Activated T-helper 1 cell treated with anti-CD3 and anti-CD28 coated beads, Interleukin-12 subunit alpha, Interleukin-12 subunit beta, Interleukin-2, Interleukin-4 antibody, amounts not matched to agents 30 ng/mL and 10 ng/mL and 1 ng/mL, durations not matched to agents 14 hours and 24 hours and 36 hours (primary cell): ENCODE measurements at regions of chr20 and their contacts with region 1.

Region 1: DNA sequence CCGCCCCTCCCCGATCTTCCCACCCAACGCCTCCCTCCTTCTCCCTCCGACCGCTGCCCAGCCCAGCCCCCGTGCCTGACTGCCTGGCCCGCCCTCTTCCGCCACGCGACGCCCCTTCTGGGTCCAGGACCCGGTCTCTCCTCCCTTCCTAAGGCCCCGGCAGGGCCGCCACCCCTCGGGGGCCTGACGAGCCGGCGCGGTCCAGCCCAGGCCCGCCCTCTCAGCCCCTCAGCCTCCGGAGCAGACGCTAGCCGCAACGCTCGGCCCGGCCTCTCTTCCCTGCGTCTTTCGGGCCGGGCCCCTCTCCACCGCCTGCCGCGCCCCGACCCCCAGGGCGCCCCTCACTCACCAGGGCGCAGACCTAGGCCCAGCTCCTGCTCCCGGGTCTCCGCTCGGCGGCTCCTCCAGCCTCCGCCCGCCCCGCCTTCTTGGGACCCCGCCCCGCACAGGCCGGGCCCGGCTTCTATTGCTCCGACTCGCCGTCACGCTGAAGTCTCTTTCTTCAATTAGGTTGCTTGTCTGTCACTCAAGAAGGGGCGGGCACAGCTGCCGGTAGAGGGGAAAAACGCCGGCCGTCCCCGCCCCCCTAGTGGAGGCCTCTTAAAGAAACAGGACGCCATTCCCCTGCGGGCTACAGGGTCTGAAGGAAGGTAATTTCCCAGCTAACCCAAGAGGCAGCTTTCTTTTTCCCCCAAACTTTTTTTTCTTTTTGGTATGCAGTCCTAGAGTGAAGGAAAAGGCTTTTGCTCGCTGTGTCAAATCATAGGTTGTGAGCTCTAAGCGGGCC is at the start of gene ELMO2:
- DNase-seq: peak; percentile 94
- H3K4me3 Mint-ChIP-seq: peak within 1 kb of the TSS; percentile 94
- H3K27ac Mint-ChIP-seq: peak within 1 kb of the TSS; percentile 96
- H3K4me1 Mint-ChIP-seq: peaks cover 68% of the 10 kb centered on the region
- H3K27me3 Mint-ChIP-seq: no peaks in the 10 kb centered on the region
- total RNA-seq, gene ELMO2: 79.7 and 91.1 TPM in 2 replicates

Region 2: GRCh38 chr20:45934586-45935415 is 471.6 kb before region 1 on chr20 and contains the start of gene PCIF1:
- intact Hi-C with region 1: loop called (anchors 1 kb)
- DNase-seq: peak; percentile 96
- H3K4me3 Mint-ChIP-seq: peak within 1 kb of the TSS; percentile 99
- H3K27ac Mint-ChIP-seq: peak within 1 kb of the TSS; percentile 98
- H3K4me1 Mint-ChIP-seq: peaks cover 23% of the 10 kb centered on the region
- H3K27me3 Mint-ChIP-seq: no peaks in the 10 kb centered on the region
- total RNA-seq, gene PCIF1: 27.9 and 28.5 TPM in 2 replicates

Region 3: DNA sequence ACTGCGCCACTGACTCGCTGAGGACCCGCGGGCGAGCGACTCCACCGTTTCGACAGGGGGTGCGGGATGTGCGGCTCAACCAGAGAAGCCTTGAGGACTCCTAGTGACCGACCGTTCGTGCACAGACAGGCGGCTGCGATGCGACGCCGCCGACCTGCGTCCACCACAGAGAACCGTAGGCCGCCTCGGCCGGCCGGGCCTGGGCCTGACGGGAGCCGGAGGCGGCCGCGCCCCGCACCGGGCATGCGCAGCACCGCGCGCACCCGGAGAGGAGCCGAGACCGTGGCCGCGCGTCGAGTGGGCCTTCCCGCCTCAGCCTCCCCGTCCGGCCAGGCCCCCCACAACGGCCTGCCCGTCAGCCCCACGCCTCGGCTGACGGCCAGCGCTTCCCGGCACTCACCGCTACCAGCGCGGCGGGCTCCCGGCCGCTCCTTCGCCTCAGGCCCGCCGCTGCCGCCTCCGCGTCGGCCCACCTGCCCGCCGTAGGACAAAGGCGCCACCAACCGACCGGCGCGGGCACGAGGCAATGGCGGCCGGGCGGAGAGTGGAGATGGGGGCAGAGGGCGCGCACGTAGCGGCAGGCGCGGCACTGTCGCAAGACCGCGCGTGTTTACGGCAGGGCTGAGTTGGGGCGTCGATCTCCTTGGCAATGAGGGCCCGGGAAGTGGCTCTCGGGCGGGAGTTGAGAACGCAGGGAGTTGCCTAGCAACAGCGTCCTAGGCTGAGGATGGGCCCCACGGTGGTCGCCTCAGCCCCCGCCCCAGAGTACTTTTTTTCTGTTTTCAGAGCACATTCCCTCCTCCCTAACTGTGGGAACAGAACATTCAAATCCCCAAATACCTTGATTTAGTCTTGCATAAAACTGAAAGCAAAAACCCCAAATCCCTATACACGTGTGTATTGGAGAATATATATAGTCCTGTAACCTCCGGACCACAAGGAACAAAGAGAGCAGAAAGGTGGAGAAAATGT is 316.7 kb before region 1 on chr20 and contains the start of gene NCOA5:
- intact Hi-C with region 1: loop called (anchors 1 kb)
- DNase-seq: peak; percentile 91
- H3K4me3 Mint-ChIP-seq: peak within 1 kb of the TSS; percentile 92
- H3K27ac Mint-ChIP-seq: peak within 1 kb of the TSS; percentile 94
- H3K4me1 Mint-ChIP-seq: peaks cover 48% of the 10 kb centered on the region
- H3K27me3 Mint-ChIP-seq: peaks cover 4% of the 10 kb centered on the region
- total RNA-seq, gene NCOA5: 30.4 and 32.9 TPM in 2 replicates

Region 4: GRCh38 chr20:46324960-46325703 is 81.3 kb before region 1 on chr20:
- intact Hi-C with region 1: no loop called
- DNase-seq: no peak
- H3K4me3 Mint-ChIP-seq: no peak overlapping the region
- H3K27ac Mint-ChIP-seq: no peak overlapping the region
- H3K4me1 Mint-ChIP-seq: no peaks in the 10 kb centered on the region
- H3K27me3 Mint-ChIP-seq: peaks cover 19% of the 10 kb centered on the region

Region 5: DNA sequence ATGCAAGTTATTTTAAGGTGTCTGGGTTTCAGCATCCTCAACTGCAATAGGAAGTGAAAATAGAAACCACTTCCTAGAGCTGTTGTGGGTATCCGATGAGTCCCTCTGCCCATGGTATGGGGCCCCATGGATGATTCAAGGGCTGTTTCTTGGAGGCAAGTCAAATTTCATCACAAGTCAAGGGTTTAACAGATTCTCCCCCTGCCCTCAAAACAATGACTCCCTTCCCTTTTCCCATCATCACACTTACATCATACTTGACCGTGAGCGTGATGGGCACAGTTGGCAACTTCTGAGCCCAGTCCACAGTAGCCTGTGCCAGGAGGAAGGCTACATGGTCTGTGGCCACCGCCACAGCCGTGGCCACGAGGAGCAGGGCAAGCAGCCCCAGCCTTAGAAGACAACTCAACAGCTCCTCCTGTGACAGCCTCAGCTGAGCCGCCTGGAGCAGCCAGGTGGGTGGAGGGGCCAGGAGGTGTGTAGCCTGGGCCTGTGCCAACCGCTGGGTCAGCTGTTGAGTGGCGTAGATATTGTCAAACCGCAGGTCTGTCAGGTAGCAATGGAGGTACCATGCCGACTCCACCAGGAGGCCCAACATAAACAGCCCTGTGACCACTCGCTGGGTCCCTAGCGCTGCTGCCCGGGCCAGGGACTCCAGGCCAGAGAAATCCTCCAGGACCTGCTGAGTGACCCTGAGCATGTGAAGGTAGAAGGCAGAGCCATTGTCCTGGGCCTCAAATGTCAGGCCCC is 138.9 kb after region 1 on chr20:
- intact Hi-C with region 1: loop called (anchors 2 kb)
- DNase-seq: peak; percentile 41
- H3K4me3 Mint-ChIP-seq: peak overlapping the region; percentile 68
- H3K27ac Mint-ChIP-seq: peak overlapping the region; percentile 96
- H3K4me1 Mint-ChIP-seq: peaks cover 11% of the 10 kb centered on the region
- H3K27me3 Mint-ChIP-seq: peaks cover 5% of the 10 kb centered on the region

Region 6: DNA sequence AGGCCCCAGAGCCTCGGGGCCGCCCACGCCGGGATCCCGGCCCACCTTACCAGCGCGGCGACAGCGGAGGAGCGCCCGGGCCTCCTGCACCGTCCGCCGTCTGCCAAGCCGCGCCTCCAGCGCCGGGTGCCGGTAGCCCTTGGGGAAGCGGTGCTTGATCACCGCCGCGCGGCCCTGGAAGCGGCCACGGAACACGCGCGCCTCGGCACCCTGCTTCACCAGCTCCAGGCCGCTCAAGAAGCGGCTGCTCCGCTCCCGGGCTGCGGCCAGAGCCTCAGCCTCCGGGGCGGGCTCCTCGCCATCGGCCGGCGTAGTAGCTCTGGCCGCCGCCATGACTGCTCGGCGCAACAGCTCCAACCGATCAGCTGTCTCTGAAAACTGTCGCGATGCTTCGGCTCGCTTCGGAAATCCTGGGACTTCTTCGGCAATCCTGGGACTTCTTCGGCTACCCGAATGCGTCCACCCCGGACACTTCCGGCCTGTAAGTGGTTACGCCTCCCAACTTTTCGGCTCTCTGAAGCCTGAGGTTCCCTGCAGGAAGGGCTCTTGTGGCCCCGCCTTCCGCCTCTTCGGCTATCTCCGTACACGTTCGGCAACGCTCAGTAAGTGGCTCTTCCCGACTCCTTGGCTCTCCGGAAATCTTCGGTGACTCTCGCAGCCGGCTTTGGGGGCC is 282.8 kb after region 1 on chr20 and contains the start of gene TP53RK:
- intact Hi-C with region 1: loop called (anchors 2 kb)
- DNase-seq: peak; percentile 94
- H3K4me3 Mint-ChIP-seq: peak within 1 kb of the TSS; percentile 88
- H3K27ac Mint-ChIP-seq: peak within 1 kb of the TSS; percentile 91
- H3K4me1 Mint-ChIP-seq: peaks cover 52% of the 10 kb centered on the region
- H3K27me3 Mint-ChIP-seq: peaks cover 3% of the 10 kb centered on the region
- total RNA-seq, gene TP53RK: 16.8 and 18.5 TPM in 2 replicates